Activated CD4-positive, alpha-beta memory T cell treated with anti-CD3 and anti-CD28 coated beads, Interleukin-2, amount 10 ng/mL, durations not matched to agents 7 days and 5 days (primary cell): ENCODE measurements at regions of chr1 and their contacts with region 1.

Region 1: GRCh38 chr1:24744911-24745710 is at the start of gene CLIC4:
- DNase-seq: peak; percentile 100
- H3K4me3 Mint-ChIP-seq: peak within 1 kb of the TSS; percentile 90
- H3K27ac Mint-ChIP-seq: peak within 1 kb of the TSS; percentile 77
- H3K4me1 Mint-ChIP-seq: peaks cover 50% of the 10 kb centered on the region
- H3K27me3 Mint-ChIP-seq: peaks cover 12% of the 10 kb centered on the region
- total RNA-seq, gene CLIC4: 28.9 to 30.6 TPM

Region 2: GRCh38 chr1:24688621-24689195 is 56.4 kb before region 1 on chr1:
- CTCF ChIA-PET with region 1: interaction called, 24 read pairs
- POLR2A ChIA-PET with region 1: interaction called, 11 read pairs
- DNase-seq: peak; percentile 65
- H3K4me3 Mint-ChIP-seq: no peak overlapping the region
- H3K27ac Mint-ChIP-seq: no peak overlapping the region
- H3K4me1 Mint-ChIP-seq: peaks cover 9% of the 10 kb centered on the region
- H3K27me3 Mint-ChIP-seq: peaks cover 1% of the 10 kb centered on the region

Region 3: GRCh38 chr1:24695202-24695974 is 49.7 kb before region 1 on chr1:
- CTCF ChIA-PET with region 1: interaction called, 14 read pairs
- POLR2A ChIA-PET with region 1: interaction called, 3 read pairs
- DNase-seq: peak; percentile 34
- H3K4me3 Mint-ChIP-seq: no peak overlapping the region
- H3K27ac Mint-ChIP-seq: peak overlapping the region; percentile 64
- H3K4me1 Mint-ChIP-seq: peaks cover 35% of the 10 kb centered on the region
- H3K27me3 Mint-ChIP-seq: peaks cover 7% of the 10 kb centered on the region

Region 4: DNA sequence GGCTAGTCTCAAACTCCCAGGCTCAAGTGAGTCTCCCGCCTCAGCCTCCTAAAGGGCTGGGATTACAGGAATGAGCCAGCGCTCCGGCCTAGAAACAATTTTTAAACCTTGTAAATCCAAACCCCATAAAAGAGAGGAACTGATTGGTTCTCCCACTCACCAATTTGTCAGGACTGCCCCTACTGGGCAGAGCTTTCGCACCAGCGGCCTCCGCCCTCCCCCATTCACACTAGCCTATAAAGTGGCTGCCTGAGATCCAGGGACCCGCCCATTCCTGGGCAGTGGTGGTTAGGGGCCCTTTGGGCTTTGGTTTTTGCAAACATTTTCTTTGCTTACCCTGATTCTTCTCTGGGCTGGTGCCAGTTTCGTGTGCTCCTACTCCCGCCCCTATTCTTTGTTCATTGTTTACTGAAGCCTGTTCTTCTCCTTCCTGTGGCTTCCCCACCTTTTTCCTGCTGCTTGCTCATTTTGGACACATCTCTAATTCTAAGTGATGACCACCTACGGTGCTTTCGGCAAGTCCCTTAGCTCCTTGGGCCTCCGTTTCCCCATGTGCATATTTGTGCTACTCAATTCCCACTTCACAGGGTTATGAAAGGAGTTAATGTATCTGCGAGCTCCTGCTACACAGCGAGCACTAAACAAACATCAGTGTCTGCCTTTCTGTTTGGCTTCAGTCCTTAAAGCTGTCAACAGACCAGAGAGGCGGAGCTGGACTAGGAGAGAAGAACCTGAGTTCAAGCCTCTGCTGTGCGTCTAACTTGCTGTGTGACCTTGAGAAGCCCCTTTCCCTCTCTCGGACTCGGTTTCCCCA is 39.6 kb before region 1 on chr1:
- CTCF ChIA-PET with region 1: interaction called, 13 read pairs
- POLR2A ChIA-PET with region 1: interaction called, 4 read pairs
- DNase-seq: peak; percentile 59
- H3K4me3 Mint-ChIP-seq: no peak overlapping the region
- H3K27ac Mint-ChIP-seq: peak overlapping the region; percentile 75
- H3K4me1 Mint-ChIP-seq: peaks cover 44% of the 10 kb centered on the region
- H3K27me3 Mint-ChIP-seq: no peaks in the 10 kb centered on the region

Region 5: GRCh38 chr1:24721533-24721932 is 23.6 kb before region 1 on chr1:
- CTCF ChIA-PET with region 1: interaction called, 11 read pairs
- POLR2A ChIA-PET with region 1: interaction called, 7 read pairs
- DNase-seq: no peak
- H3K4me3 Mint-ChIP-seq: no peak overlapping the region
- H3K27ac Mint-ChIP-seq: no peak overlapping the region
- H3K4me1 Mint-ChIP-seq: peaks cover 11% of the 10 kb centered on the region
- H3K27me3 Mint-ChIP-seq: no peaks in the 10 kb centered on the region

Region 6: DNA sequence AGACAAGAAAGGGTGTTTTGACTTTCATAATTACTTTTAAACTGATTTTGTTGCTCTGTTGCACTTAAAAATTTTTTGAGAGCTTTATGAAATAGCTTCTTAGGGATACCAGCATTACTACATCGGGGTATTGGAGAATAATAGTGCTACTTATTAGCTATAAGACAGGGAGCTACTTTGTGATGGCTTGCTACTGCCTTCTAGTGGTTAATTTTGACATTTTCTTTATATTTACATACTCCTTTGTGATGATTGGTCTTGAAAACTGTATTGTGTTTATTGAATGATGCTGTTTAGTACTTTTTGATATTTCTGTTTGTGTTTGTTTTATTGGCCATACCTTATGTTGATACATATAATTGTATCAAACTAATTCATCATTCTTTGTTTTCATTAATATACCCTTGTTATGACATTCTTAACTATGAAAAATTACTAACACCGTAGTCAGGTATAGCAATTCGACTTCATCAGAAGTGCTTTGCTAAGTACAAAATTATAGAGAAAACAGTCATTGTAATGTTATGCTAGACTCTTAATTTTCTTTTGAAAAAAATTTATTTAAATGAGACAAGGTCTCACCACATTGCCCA is 85.7 kb after region 1 on chr1:
- CTCF ChIA-PET with region 1: interaction called, 12 read pairs
- POLR2A ChIA-PET with region 1: no interaction called
- DNase-seq: no peak
- H3K4me3 Mint-ChIP-seq: no peak overlapping the region
- H3K27ac Mint-ChIP-seq: no peak overlapping the region
- H3K4me1 Mint-ChIP-seq: peaks cover 1% of the 10 kb centered on the region
- H3K27me3 Mint-ChIP-seq: no peaks in the 10 kb centered on the region

Region 7: DNA sequence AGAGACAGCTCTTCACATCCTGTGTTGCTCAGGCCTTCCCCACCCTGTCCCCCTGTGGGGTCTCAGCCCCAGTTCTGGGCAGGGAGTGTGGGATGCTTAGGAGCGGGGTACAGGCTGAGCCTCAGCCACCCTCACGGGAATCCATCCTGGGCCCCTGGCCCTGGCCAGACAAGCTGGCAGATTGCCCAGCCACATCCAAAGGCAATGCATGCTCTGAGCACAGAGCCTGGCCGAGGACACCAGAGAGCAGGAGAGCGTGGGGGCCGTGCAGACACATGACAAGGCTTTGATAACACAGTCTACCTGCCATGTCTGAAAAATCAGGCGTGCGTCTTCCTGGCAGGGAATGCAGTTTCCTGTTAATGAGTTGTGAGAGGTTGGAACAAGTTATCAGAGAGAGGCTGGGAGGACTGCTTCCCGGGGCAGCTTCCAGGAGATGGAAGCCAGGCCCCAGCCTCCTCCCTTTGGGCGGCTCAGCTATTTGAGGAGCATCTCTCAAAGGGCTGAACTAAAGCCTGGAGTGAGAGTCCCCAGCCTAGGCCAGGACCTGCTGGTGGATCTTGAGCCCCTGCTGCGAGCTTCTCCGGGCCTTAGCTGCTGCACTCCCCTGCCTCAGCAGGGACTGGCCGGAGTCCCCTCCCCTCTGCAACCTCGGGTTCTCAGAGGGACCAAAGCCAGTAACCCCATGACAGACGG is 982.7 kb after region 1 on chr1:
- CTCF ChIA-PET with region 1: no interaction called
- POLR2A ChIA-PET with region 1: no interaction called
- DNase-seq: no peak
- H3K4me3 Mint-ChIP-seq: no peak overlapping the region
- H3K27ac Mint-ChIP-seq: no peak overlapping the region
- H3K4me1 Mint-ChIP-seq: peaks cover 22% of the 10 kb centered on the region
- H3K27me3 Mint-ChIP-seq: peaks cover 61% of the 10 kb centered on the region